CD8-positive, alpha-beta memory T cell (primary cell): ENCODE measurements at regions of chr5 and their contacts with region 1.

Region 1: DNA sequence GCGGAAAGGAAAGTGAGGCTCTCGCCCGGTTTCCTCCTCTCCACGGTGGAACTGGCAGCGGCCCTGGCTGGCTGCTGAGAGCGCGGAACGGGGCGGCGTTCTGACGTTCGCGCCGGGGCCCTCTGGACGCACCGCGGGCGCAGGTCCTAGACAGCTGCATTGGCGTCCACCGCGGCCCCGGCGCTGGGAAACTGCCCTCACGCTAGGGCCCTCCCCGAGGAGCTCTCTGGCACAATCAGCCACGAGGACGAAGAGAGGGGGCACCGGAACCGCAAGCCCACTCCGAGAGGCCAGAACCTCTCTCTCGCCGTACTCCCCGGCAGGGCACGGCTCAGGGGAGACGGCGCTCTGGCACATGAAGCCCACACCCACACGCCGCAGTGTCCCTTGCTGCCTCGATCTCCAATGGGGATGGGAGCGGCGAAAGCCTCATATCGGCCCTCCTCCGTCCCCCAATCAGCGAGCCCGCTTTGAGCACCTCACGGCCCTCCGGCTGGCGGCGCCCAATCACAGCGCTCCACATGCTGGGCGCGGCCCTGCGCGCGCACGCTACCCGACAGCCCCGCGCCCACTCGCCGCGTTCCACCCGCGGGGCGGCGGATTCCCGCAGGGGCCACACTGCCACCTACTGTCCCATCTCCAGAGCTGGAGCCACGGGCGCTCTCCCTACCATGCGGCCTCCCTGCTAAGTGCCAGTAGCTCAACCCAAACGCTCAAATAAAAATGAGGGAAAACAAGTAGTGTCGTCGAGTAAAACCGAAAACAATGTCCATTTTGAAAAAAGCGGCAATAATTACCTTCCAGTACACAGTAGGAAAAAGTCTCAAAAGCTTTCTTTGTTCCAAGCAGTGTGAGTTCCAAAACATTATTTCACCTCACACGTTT is 11.8 kb downstream of the MRPS27 start:
- DNase-seq: peak; percentile 95 to 97 (median 95)
- H3K4me3 ChIP-seq: peak overlapping the region; percentile 89
- H3K4me3 Mint-ChIP-seq: peak overlapping the region; percentile 87 to 94 (median 94)
- H3K27ac ChIP-seq: peak overlapping the region; percentile 95
- H3K27ac Mint-ChIP-seq: peak overlapping the region; percentile 64 to 98 (median 94)
- H3K4me1 ChIP-seq: peaks cover 9% of the 10 kb centered on the region
- H3K4me1 Mint-ChIP-seq: peaks cover 26 to 44% (median 36%) of the 10 kb centered on the region in 3 donors
- H3K27me3 ChIP-seq: no peaks in the 10 kb centered on the region
- H3K27me3 Mint-ChIP-seq: peaks cover 0 to 2% of the 10 kb centered on the region in 2 donors

Region 2: DNA sequence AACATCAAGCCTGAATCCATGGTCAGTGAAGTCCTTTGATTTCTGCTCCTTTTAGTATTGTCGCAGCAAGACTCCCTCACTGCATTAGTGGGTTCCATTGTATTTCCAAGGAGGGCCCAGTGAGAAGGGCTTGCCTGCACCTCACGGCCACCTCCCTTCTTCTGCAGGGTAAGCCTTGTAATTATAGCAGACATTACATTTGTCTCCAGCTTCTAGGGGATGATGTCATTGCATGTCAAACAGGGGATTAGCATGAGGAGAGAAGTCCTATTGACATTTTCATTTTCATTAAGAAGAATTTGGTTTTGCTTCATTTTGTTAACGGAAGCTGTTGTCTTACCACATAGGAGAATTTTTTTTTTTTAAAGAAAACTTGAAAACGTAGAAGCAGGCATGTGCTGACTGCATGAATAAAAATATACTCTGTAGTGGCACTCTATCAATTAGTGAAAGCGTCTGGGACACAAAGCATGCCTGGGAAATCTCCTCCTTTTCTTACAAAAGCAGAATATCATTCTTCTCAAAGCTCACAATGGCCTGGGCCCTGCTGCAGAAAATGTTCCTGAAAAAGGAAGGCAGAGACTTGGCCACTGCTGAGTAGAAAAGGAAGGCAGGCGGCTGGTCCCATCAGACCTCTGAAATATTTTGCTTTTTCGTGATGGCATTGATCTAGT is 173.8 kb before region 1 on chr5:
- CTCF ChIA-PET with region 1: interaction called, 30 read pairs
- POLR2A ChIA-PET with region 1: no interaction called
- DNase-seq: no peak
- H3K4me3 ChIP-seq: no peak overlapping the region
- H3K4me3 Mint-ChIP-seq: no peak overlapping the region
- H3K27ac ChIP-seq: no peak overlapping the region
- H3K27ac Mint-ChIP-seq: no peak overlapping the region
- H3K4me1 ChIP-seq: no peaks in the 10 kb centered on the region
- H3K4me1 Mint-ChIP-seq: peaks cover 4 to 8% (median 5%) of the 10 kb centered on the region in 3 donors
- H3K27me3 ChIP-seq: no peaks in the 10 kb centered on the region
- H3K27me3 Mint-ChIP-seq: peaks cover 13 to 58% of the 10 kb centered on the region in 2 donors

Region 3: DNA sequence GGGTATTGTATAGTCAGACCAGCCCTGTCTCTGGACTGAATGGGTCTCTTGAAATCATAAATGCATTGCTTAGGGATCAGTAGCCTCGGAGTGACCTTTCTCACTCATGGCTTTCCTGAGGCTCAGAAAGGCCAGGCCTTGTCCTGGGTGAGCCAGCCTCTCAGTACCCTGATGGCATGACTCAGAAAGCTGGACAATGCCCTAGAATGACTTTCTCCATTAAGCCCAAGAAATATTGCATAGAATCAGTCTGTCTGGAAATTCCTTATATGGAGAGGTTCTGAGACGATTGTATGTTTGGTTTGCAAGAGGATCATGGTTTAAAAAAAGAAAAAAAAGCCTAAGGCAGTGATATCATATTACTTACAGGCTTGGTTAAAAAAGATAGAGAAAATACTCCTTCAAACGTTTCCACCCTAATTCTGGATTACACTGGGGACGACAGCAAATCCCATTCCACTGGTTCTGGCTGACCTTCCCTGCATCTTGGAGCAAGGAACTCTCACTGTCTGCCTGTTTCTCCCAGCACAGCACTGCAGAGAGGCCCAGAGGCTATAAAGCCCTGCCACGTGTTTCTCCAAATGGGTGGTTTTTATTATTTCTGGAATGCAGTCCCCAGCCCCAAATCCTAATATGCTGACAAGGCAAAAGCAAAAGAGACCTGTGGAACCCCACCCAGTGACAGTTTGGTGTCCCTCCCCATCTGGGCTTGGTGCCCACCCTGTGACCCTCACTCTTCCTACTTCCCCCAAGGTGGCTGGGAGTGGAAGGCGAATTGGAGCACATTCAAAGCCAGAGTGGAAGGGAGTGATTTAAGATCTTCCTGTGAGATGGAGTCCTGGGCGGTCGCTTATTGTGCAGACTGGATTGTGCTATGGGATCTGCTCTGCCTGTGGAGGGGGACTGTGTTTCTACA is 166.5 kb before region 1 on chr5:
- CTCF ChIA-PET with region 1: interaction called, 10 read pairs
- POLR2A ChIA-PET with region 1: no interaction called
- DNase-seq: no peak
- H3K4me3 ChIP-seq: no peak overlapping the region
- H3K4me3 Mint-ChIP-seq: no peak overlapping the region
- H3K27ac ChIP-seq: no peak overlapping the region
- H3K27ac Mint-ChIP-seq: no peak overlapping the region
- H3K4me1 ChIP-seq: no peaks in the 10 kb centered on the region
- H3K4me1 Mint-ChIP-seq: peaks cover 4 to 10% (median 5%) of the 10 kb centered on the region in 3 donors
- H3K27me3 ChIP-seq: no peaks in the 10 kb centered on the region
- H3K27me3 Mint-ChIP-seq: peaks cover 21 to 55% of the 10 kb centered on the region in 2 donors

Region 4: GRCh38 chr5:72288924-72289323 is 19.3 kb before region 1 on chr5:
- CTCF ChIA-PET with region 1: interaction called, 16 read pairs
- POLR2A ChIA-PET with region 1: no interaction called
- DNase-seq: no peak
- H3K4me3 ChIP-seq: no peak overlapping the region
- H3K4me3 Mint-ChIP-seq: no peak overlapping the region
- H3K27ac ChIP-seq: no peak overlapping the region
- H3K27ac Mint-ChIP-seq: peak overlapping the region in 1 of 8 donors; percentile 10
- H3K4me1 ChIP-seq: no peaks in the 10 kb centered on the region
- H3K4me1 Mint-ChIP-seq: peaks cover 0 to 4% (median 0%) of the 10 kb centered on the region in 3 donors
- H3K27me3 ChIP-seq: no peaks in the 10 kb centered on the region
- H3K27me3 Mint-ChIP-seq: no peaks in the 10 kb centered on the region

Region 5: DNA sequence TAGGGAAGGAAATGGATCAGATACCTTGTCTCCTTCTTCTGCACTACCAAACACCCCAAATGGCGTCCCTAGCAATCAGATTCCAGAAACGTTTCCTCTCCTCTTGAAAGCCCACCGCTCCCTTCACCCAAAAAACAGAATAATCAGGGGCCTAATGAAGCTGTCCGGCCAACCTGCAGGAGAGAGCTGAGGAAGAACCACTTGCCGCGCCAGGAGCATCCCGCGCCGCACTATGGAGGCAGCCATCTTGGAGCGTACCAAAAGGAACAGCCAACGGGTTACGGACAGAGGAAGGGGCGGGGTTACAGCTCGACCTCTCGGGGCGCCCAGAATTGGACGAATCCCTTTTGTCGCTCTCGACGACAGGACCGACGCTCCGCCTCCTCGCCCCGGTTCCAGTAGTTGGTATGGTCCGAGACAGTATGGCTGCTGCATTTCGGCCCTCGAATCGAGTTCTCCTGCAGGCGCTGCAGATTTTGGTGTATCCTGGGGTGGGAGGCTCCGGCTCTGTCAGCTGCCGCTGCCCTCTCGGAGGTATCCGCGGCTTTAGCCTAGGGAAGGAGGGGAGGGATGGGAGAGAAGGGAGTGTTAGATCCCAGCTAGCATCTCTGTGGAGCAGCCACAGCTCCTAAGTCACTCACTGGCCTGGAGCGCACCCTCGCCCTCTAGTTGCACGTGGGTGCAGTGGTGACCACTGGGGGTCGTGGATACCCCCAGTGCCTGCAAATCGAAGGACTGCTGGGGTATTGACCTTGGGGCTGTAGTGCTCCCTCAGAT is 12.0 kb after region 1 on chr5 and contains the starts of genes MRPS27 and PTCD2:
- CTCF ChIA-PET with region 1: interaction called, 54 read pairs
- POLR2A ChIA-PET with region 1: interaction called, 27 read pairs
- DNase-seq: peak; percentile 92 to 97 (median 94)
- H3K4me3 ChIP-seq: peak within 1 kb of the TSS; percentile 100
- H3K4me3 Mint-ChIP-seq: peak within 1 kb of the TSS; percentile 94 to 99 (median 98)
- H3K27ac ChIP-seq: peak within 1 kb of the TSS; percentile 75
- H3K27ac Mint-ChIP-seq: peak within 1 kb of the TSS; percentile 83 to 99 (median 96)
- H3K4me1 ChIP-seq: peaks cover 14% of the 10 kb centered on the region
- H3K4me1 Mint-ChIP-seq: peaks cover 26 to 57% (median 44%) of the 10 kb centered on the region in 3 donors
- H3K27me3 ChIP-seq: no peaks in the 10 kb centered on the region
- H3K27me3 Mint-ChIP-seq: no peaks in the 10 kb centered on the region
- total RNA-seq, gene MRPS27: 86.9 to 91.9 TPM
- total RNA-seq, gene PTCD2: 14.0 to 15.0 TPM

Region 6: GRCh38 chr5:72611118-72611730 is 303.0 kb after region 1 on chr5:
- CTCF ChIA-PET with region 1: no interaction called
- POLR2A ChIA-PET with region 1: no interaction called
- DNase-seq: peak in 4 of 5 donors; percentile 4 to 49 (median 12)
- H3K4me3 ChIP-seq: no peak overlapping the region
- H3K4me3 Mint-ChIP-seq: no peak overlapping the region
- H3K27ac ChIP-seq: no peak overlapping the region
- H3K27ac Mint-ChIP-seq: no peak overlapping the region
- H3K4me1 ChIP-seq: no peaks in the 10 kb centered on the region
- H3K4me1 Mint-ChIP-seq: peaks cover 0 to 6% (median 2%) of the 10 kb centered on the region in 3 donors
- H3K27me3 ChIP-seq: no peaks in the 10 kb centered on the region
- H3K27me3 Mint-ChIP-seq: peaks cover 0 to 7% of the 10 kb centered on the region in 2 donors